ENCODE measurements at regions of chr15 and their contacts with region 1.

Region 1: GRCh38 chr15:85318048-85318731 is 62.2 kb upstream of the AKAP13 start:
- DNase-seq: peak; percentile 41
- H3K4me3 Mint-ChIP-seq: peak overlapping the region; percentile 38
- H3K27ac Mint-ChIP-seq: peak overlapping the region; percentile 87
- H3K4me1 Mint-ChIP-seq: peaks cover 59% of the 10 kb centered on the region
- H3K27me3 Mint-ChIP-seq: no peaks in the 10 kb centered on the region

Region 2: DNA sequence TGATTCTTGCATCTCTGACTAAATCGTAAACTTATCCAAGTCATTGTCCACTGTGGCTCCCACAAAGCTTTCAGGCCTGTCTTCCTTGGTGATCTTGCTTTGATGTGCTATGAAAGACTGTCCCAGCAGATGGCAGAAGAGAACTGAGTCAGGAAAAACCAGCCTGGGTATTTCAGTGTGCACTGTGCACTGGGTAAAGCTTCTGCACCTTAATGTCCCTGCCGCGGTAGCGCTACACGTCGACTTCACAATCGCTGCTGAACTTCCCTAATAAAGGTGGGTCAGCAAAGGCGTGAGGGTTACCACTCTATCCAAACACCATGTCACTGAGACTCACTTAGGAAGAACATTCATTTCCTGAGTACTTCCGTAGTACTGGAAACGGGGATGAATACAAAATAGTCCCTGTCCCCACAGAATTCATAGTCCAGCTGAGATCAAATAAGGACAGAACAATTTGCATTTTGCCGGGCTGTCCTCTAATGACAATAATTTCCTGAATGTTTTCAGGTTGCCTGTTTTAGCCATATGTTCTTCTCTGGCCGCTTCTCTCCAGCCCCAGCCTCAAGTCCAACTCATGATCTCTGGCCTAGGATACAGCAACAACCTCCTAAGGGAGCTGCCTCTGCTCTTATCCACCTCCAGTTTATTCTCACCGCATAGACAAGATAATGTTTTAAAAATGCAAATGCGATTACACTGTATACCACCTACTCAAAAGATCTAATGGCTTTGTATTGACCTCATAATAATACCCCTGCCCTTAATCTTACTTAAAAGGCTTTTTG is 21.4 kb before region 1 on chr15:
- intact Hi-C with region 1: loop called (anchors 1 kb)
- DNase-seq: peak; percentile 68
- H3K4me3 Mint-ChIP-seq: peak overlapping the region; percentile 34
- H3K27ac Mint-ChIP-seq: no peak overlapping the region
- H3K4me1 Mint-ChIP-seq: peaks cover 18% of the 10 kb centered on the region
- H3K27me3 Mint-ChIP-seq: peaks cover 5% of the 10 kb centered on the region

Region 3: DNA sequence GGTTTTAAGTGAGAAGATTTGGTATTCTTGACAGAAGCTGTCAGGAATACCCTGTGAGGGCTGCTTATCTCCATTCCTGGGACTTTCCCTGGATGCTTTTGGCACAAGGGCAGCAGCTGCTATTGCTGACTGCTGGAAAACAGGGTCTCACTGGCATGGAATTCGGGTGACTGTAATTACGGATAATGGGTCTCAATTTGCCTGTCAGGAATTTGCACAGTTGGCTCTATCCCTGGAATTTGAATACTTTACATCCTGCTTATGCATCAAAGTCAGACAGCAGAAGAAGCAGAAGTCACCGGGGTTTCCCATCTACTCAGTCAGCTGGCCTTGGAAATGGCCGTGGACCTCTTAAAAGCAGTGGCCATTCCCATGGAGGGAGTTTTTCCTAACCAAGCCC is 36.3 kb after region 1 on chr15:
- intact Hi-C with region 1: loop called (anchors 1 kb)
- DNase-seq: no peak
- H3K4me3 Mint-ChIP-seq: no peak overlapping the region
- H3K27ac Mint-ChIP-seq: no peak overlapping the region
- H3K4me1 Mint-ChIP-seq: peaks cover 9% of the 10 kb centered on the region
- H3K27me3 Mint-ChIP-seq: no peaks in the 10 kb centered on the region

Region 4: GRCh38 chr15:85543741-85544155 is 225.6 kb after region 1 on chr15:
- intact Hi-C with region 1: loop called (anchors 10 kb)
- DNase-seq: peak; percentile 22
- H3K4me3 Mint-ChIP-seq: peak overlapping the region; percentile 50
- H3K27ac Mint-ChIP-seq: peak overlapping the region; percentile 59
- H3K4me1 Mint-ChIP-seq: peaks cover 83% of the 10 kb centered on the region
- H3K27me3 Mint-ChIP-seq: no peaks in the 10 kb centered on the region

Region 5: GRCh38 chr15:85646538-85647091 is 328.4 kb after region 1 on chr15:
- intact Hi-C with region 1: loop called (anchors 2 kb)
- DNase-seq: peak; percentile 14
- H3K4me3 Mint-ChIP-seq: peak overlapping the region; percentile 30
- H3K27ac Mint-ChIP-seq: peak overlapping the region; percentile 92
- H3K4me1 Mint-ChIP-seq: peaks cover 44% of the 10 kb centered on the region
- H3K27me3 Mint-ChIP-seq: no peaks in the 10 kb centered on the region

Region 6: DNA sequence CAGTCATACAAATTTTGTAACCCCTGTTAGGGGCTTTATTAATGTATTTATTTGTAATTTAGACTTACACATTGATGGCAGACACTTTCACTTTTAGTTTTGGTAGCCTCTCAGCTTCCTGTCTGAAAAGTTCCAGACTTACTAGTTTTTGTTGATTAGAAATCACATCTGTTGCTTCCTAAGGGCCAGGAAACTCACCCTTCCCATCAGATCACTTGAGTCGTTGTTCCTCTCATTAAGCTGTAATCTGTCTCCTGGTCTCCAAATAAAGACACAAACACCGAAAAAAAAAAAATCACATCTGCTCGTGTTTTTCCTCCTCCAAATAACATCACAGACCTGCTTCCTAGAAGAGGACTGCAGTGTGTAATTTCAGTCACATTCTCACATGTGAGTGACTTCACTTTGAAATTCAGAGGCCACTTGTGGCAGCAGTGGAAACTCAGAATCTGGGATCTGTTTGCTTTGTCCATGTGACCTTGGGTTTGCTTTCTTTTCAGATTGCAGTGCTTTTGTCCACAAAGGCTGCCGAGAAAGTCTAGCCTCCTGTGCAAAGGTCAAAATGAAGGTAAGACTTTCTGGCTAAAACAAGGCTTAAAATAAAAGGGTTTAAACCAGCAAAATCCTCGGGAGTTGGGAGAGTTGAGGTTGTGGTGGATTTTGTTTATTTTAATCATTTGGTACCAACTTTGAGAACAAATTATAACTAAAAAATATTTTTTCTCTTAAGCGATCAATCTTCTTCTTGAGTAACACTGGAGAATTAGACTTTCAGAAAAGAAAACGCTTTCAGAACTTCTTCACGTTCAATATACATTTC is 389.5 kb after region 1 on chr15:
- intact Hi-C with region 1: loop called (anchors 5 kb)
- DNase-seq: no peak
- H3K4me3 Mint-ChIP-seq: peak overlapping the region; percentile 83
- H3K27ac Mint-ChIP-seq: peak overlapping the region; percentile 99
- H3K4me1 Mint-ChIP-seq: peaks cover 88% of the 10 kb centered on the region
- H3K27me3 Mint-ChIP-seq: no peaks in the 10 kb centered on the region

Measured in activated T-helper 1 cell treated with anti-CD3 and anti-CD28 coated beads, Interleukin-12 subunit alpha, Interleukin-12 subunit beta, Interleukin-2, Interleukin-4 antibody, amounts not matched to agents 30 ng/mL and 10 ng/mL and 1 ng/mL, durations not matched to agents 14 hours and 24 hours and 36 hours (primary cell).